Adrenal gland (tissue), 19 donors: ENCODE measurements at regions of chr13 and their contacts with region 1.

Region 1: GRCh38 chr13:89432997-89433396 is 1761.8 kb downstream of the SLITRK5 start:
- DNase-seq: no peak
- H3K4me3 ChIP-seq: no peak overlapping the region
- H3K27ac ChIP-seq: no peak overlapping the region
- H3K4me1 ChIP-seq: no peaks in the 10 kb centered on the region
- H3K27me3 ChIP-seq: no peaks in the 10 kb centered on the region
- CTCF ChIP-seq: no peak
- POLR2A ChIP-seq: no peak

Region 2: DNA sequence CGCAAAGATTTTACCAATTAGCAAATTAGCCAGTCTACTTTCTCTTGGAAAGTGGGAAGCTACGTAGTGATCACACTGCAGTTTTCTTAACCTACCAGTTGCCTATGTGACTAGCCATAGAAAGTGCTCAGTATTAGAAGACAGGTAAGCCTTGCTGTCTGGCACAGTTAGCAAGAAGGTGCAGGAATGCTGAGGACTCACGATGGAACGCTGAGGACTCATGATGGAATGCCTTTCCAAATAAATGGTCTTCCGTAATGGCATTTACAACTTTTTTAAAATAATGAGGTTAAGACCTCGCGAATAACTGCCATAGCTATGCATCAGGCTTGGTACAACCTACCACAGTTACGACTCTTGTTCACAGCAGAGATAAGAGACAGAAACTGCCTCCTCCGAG is 268.9 kb after region 1 on chr13:
- intact Hi-C with region 1: loop called in 1 of 2 experiments (anchors 10 kb)
- DNase-seq: no peak
- H3K4me3 ChIP-seq: no peak overlapping the region
- H3K27ac ChIP-seq: no peak overlapping the region
- H3K4me1 ChIP-seq: no peaks in the 10 kb centered on the region
- H3K27me3 ChIP-seq: no peaks in the 10 kb centered on the region
- CTCF ChIP-seq: no peak
- POLR2A ChIP-seq: no peak

Region 3: GRCh38 chr13:89740994-89741685 is 308.1 kb after region 1 on chr13:
- intact Hi-C with region 1: no loop called
- DNase-seq: no peak
- H3K4me3 ChIP-seq: no peak overlapping the region
- H3K27ac ChIP-seq: no peak overlapping the region
- H3K4me1 ChIP-seq: no peaks in the 10 kb centered on the region
- H3K27me3 ChIP-seq: no peaks in the 10 kb centered on the region
- CTCF ChIP-seq: no peak
- POLR2A ChIP-seq: no peak